Common myeloid progenitor, CD34-positive (primary cell): ENCODE measurements at regions of chr1 and their contacts with region 1.

Region 1: DNA sequence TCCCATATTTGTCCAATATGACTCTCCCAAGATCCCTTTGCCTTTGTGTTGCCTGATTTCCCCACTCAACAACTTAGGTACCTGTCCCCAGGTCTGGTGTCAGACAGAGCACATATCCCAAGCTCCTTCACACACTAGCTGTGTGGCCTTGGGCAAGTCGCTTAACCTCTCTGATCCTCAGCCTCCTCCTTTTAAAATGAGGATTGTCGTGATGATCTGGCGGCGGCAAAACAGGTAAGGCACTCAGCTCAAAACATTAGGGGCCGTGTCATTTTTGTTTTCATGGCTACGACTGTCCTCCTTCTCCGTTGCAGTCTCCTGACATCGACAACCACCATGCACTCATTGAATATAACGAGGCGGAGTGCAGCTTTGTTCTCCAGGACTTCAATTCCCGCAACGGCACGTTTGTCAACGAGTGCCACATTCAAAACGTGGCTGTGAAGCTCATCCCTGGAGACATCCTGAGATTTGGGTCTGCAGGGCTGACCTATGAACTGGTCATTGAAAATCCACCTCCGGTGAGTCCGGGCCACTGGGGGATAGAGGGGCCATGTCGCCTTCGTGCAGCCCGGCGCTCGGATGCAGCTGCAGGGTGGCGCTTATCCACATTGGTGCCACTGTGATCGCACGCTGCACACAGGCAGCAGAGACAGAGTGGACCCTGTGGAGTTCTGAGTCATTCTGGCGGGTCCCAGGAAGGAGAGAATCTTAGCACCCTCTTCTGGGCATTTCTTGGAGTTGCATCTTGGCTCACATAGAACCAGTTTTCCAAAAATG is 25.2 kb downstream of the FHAD1 start:
- DNase-seq: peak; percentile 72 to 88 (median 85)
- H3K4me3 ChIP-seq: peak overlapping the region in 1 of 7 experiments; percentile 15
- H3K27ac ChIP-seq: no peak overlapping the region
- H3K4me1 ChIP-seq: peaks cover 0 to 4% (median 3%) of the 10 kb centered on the region in 4 experiments
- H3K27me3 ChIP-seq: peaks cover 0 to 8% (median 0%) of the 10 kb centered on the region in 5 experiments

Region 2: GRCh38 chr1:15128520-15129313 is 143.5 kb before region 1 on chr1:
- CTCF ChIA-PET with region 1: interaction called, 86 read pairs
- POLR2A ChIA-PET with region 1: interaction called, 4 read pairs
- DNase-seq: peak; percentile 75 to 86 (median 80)
- H3K4me3 ChIP-seq: no peak overlapping the region
- H3K27ac ChIP-seq: no peak overlapping the region
- H3K4me1 ChIP-seq: peaks cover 0 to 4% (median 4%) of the 10 kb centered on the region in 4 experiments
- H3K27me3 ChIP-seq: no peaks in the 10 kb centered on the region

Region 3: GRCh38 chr1:15152318-15153183 is 119.6 kb before region 1 on chr1:
- CTCF ChIA-PET with region 1: interaction called, 73 read pairs
- POLR2A ChIA-PET with region 1: interaction called, 4 read pairs
- DNase-seq: peak; percentile 66 to 72 (median 67)
- H3K4me3 ChIP-seq: peak overlapping the region; percentile 34 to 77 (median 71)
- H3K27ac ChIP-seq: no peak overlapping the region
- H3K4me1 ChIP-seq: peaks cover 0 to 51% (median 42%) of the 10 kb centered on the region in 4 experiments
- H3K27me3 ChIP-seq: peaks cover 0 to 36% (median 13%) of the 10 kb centered on the region in 5 experiments

Region 4: GRCh38 chr1:15197591-15198447 is 74.4 kb before region 1 on chr1:
- CTCF ChIA-PET with region 1: interaction called, 10 read pairs
- POLR2A ChIA-PET with region 1: no interaction called
- DNase-seq: no peak
- H3K4me3 ChIP-seq: no peak overlapping the region
- H3K27ac ChIP-seq: no peak overlapping the region
- H3K4me1 ChIP-seq: no peaks in the 10 kb centered on the region
- H3K27me3 ChIP-seq: no peaks in the 10 kb centered on the region

Region 5: DNA sequence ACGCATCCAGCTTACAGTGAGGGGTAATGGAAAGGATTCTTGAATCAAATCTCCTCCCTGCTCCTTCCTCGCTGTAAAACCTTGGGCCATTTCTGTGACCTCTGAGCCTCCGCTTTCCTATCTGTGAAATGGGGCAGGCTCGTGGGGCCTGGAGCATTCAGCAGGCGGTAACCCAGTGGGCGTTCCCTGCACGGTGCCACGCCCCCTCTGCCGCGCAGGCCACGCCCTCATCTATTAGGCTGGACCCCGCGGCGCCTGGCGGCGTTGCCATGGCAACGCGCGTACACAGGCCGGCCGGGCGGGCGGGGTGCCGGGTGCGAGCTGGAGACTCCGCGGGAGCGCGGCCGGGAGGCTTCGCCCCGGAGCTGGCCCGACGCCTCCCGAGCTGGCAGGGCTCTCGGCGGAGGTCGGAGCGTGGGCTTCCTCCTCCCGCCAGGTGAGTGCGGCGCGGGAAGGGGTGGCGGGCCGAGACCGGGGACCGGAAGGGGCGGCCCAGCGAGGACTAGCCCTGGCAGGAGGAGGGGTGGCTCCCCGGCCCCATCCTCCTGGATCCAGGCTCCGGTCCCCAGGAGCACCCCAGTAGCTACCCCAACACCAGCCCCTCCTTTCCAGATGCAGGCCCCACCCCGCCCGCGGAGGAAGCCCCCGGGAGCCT is 25.1 kb before region 1 on chr1 and contains the start of gene FHAD1:
- CTCF ChIA-PET with region 1: interaction called, 24 read pairs
- POLR2A ChIA-PET with region 1: no interaction called
- DNase-seq: peak; percentile 56 to 75 (median 66)
- H3K4me3 ChIP-seq: peak within 1 kb of the TSS in 5 of 7 experiments; percentile 8 to 58 (median 42)
- H3K27ac ChIP-seq: no peak within 1 kb of the TSS
- H3K4me1 ChIP-seq: peaks cover 5 to 39% (median 35%) of the 10 kb centered on the region in 4 experiments
- H3K27me3 ChIP-seq: peaks cover 0 to 13% (median 4%) of the 10 kb centered on the region in 5 experiments